GM23248 (cell line): ENCODE measurements at regions of chr6 and their contacts with region 1.

Region 1: DNA sequence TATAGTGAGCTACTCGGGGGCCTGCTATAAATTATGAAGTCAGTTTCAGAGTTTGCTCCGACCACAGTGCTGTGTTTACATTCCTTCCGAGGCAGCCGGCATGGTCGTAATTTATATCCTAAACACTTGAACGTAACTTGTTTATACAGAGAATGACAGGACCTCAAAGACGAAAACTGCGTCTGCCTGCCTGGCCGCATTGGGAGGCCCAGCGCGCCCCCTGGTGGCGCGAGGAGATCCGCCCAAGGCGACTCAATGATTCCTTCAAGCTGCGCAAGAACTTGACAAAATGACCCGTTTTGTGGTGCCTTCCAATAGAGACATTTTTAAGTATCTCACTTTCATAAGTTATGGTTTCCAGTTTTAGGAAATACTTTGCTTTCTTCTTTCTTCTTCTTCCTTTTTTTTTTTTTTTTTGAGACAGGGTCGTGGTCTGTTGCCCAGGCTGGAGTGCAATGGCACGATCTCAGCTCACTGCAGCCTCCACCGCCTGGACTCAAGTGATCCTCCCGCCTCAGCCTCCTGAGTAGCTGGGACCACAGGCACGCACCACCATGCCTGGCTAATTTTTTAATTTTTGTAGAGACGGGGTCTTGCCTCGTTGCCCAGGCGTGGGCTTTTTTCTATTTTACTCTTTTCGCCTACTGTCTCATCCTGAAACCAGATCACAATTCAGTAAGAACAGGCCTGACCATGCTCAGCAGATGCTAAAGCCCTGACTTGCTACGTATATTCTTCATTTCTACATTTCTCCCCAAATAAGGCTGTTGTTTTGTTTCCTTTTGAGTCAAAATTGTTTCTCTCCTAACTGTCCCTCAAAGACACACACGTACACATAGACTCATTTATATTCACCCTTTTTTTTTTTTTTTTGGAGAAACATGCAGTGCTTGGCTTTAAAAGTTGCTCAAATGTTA is 7.8 kb downstream of the FOXF2 start:
- DNase-seq: peak; percentile 81
- H3K4me3 ChIP-seq: 0 out of 2 replicates have a peak overlapping the region, but pooled peaks have one; percentile 42
- H3K27ac ChIP-seq: no peak overlapping the region
- H3K4me1 ChIP-seq: 0 out of 2 replicates have a peak, but pooled peaks cover 4% of the 10 kb centered on the region
- H3K27me3 ChIP-seq: no peaks in the 10 kb centered on the region

Region 2: GRCh38 chr6:912871-913835 is 484.1 kb before region 1 on chr6:
- in situ Hi-C with region 1: loop called (anchors 25 kb)
- DNase-seq: peak; percentile 67
- H3K4me3 ChIP-seq: no peak overlapping the region
- H3K27ac ChIP-seq: no peak overlapping the region
- H3K4me1 ChIP-seq: no peaks in the 10 kb centered on the region
- H3K27me3 ChIP-seq: peaks cover 11% of the 10 kb centered on the region